ENCODE measurements at regions of chr2 and their contacts with region 1.

Region 1: DNA sequence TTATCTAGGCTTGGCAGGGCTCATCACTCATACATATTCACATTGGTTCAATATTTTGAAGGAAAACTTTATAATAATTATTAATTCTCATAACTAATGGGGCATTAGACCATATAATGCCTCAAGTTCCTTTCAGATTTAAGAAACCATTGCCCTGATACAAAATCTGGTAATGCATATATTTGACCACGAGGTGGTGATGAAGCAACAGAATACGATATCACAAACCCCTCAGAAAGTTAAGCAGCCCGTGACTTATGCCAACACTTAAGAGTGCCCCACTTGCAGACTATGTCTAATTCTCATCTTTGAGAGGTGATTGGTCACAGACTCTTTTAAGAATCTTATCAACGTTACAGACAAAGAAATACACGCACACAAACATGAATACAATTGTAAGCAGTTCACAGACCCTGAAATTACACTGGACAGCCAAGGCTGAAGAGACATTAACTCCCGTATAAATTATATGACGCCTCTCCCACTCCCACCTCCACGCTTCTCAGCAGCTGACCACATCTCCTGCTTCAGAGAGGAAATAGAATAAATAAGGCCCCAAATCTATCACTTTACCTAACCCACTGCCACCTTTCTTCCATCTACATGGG is 20.7 kb upstream of the DNAH6 start:
- DNase-seq: peak; percentile 78
- ATAC-seq: peak; percentile 82
- H3K4me3 ChIP-seq: no peak overlapping the region
- H3K27ac ChIP-seq: no peak overlapping the region
- H3K4me1 ChIP-seq: peaks cover 4% of the 10 kb centered on the region
- H3K27me3 ChIP-seq: no peaks in the 10 kb centered on the region
- CTCF ChIP-seq: peak; percentile 76
- POLR2A ChIP-seq: peak; percentile 33; the same call in 1 of the 2 replicates
- RAD21 ChIP-seq: peak; percentile 82

Region 2: DNA sequence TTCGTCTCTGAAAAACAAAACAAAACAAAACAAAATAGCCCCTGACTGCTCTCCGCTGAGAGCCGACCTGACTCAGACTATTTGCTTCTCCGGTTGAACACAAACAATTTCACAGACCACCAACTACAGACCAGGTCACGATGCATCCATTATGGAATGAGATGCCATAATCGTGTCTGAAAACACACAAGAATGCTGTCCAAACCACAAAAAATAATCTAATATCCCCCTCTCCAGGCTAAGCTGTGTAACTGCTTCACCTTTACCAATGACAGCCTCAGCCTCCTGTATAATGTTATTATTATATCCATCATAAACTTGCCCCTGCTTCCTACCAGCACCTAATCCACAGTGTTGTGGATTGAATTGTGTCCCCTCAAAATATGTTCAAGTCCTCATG is 135.4 kb after region 1 on chr2:
- CTCF ChIA-PET with region 1: no interaction called
- POLR2A ChIA-PET with region 1: no interaction called
- dilution Hi-C with region 1: no loop called
- in situ Hi-C with region 1: loop called (anchors 10 kb)
- intact Hi-C with region 1: loop called (anchors 1 kb)
- DNase-seq: peak; percentile 53
- ATAC-seq: peak; percentile 97
- H3K4me3 ChIP-seq: no peak overlapping the region
- H3K27ac ChIP-seq: no peak overlapping the region
- H3K4me1 ChIP-seq: no peaks in the 10 kb centered on the region
- H3K27me3 ChIP-seq: peaks cover 7% of the 10 kb centered on the region
- CTCF ChIP-seq: peak; percentile 60
- POLR2A ChIP-seq: no peak
- RAD21 ChIP-seq: peak; percentile 74

Region 3: GRCh38 chr2:84807063-84807830 is 311.6 kb after region 1 on chr2:
- CTCF ChIA-PET with region 1: no interaction called
- POLR2A ChIA-PET with region 1: interaction called, 11 read pairs
- dilution Hi-C with region 1: no loop called
- in situ Hi-C with region 1: no loop called
- intact Hi-C with region 1: no loop called
- DNase-seq: peak; percentile 100
- ATAC-seq: peak; percentile 87
- H3K4me3 ChIP-seq: no peak overlapping the region
- H3K27ac ChIP-seq: peak overlapping the region; percentile 97
- H3K4me1 ChIP-seq: peaks cover 11% of the 10 kb centered on the region
- H3K27me3 ChIP-seq: no peaks in the 10 kb centered on the region
- CTCF ChIP-seq: no peak
- POLR2A ChIP-seq: peak; percentile 76
- RAD21 ChIP-seq: no peak

Region 4: GRCh38 chr2:84865181-84865783 is 369.6 kb after region 1 on chr2:
- CTCF ChIA-PET with region 1: no interaction called
- POLR2A ChIA-PET with region 1: no interaction called
- dilution Hi-C with region 1: no loop called
- in situ Hi-C with region 1: no loop called
- intact Hi-C with region 1: loop called (anchors 5 kb)
- DNase-seq: peak; percentile 43
- ATAC-seq: peak; percentile 63
- H3K4me3 ChIP-seq: no peak overlapping the region
- H3K27ac ChIP-seq: no peak overlapping the region
- H3K4me1 ChIP-seq: peaks cover 2% of the 10 kb centered on the region; the same call in 1 of the 2 replicates
- H3K27me3 ChIP-seq: no peaks in the 10 kb centered on the region
- CTCF ChIP-seq: peak; percentile 43; the same call in 1 of the 2 replicates
- POLR2A ChIP-seq: no peak
- RAD21 ChIP-seq: peak; percentile 57

Region 5: GRCh38 chr2:85277416-85278158 is 781.9 kb after region 1 on chr2:
- CTCF ChIA-PET with region 1: no interaction called
- POLR2A ChIA-PET with region 1: no interaction called
- dilution Hi-C with region 1: no loop called
- in situ Hi-C with region 1: loop called (anchors 25 kb)
- intact Hi-C with region 1: no loop called
- DNase-seq: peak; percentile 89
- ATAC-seq: peak; percentile 89
- H3K4me3 ChIP-seq: no peak overlapping the region
- H3K27ac ChIP-seq: peak overlapping the region; percentile 87
- H3K4me1 ChIP-seq: peaks cover 36% of the 10 kb centered on the region
- H3K27me3 ChIP-seq: no peaks in the 10 kb centered on the region
- CTCF ChIP-seq: no peak
- POLR2A ChIP-seq: no peak
- RAD21 ChIP-seq: no peak

Region 6: DNA sequence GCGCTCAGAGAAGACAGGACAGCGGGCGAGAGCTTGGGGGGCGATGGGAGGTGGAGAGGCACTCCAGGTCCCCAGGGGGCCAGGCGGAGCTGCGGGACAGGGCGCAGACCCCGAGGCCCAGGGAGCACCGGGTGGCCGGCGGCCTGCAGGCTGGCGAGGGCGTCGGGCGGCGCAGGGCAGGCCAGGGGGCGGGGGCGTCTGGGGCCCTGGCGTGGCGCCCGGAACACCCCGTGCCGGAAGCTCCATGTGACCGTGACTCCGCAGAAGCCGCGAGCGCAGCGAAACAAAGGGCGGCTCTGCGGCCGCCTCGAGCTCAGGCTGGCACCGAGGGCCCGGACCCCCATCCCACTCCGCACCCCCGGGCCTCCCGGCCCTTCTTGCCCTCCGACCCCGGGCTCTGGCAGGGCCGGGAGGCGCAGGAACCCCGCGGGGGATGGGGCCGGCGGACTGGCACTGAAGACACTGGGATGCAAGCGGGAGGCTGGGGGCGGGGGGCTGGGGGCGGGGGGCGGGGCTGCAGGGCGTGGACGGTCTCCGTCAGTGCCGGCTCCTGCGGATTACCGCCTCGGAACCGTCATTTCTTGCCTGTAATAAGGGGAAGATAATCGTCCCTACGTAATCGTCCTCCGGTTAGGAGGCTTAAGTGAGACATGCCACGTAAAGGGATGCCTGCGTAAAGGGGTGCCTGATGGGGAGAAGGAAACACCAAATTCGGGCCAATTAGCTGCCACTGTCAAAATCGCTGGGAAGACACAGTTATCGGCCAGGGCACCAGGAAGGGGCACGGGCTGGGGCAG is 942.0 kb after region 1 on chr2:
- CTCF ChIA-PET with region 1: no interaction called
- POLR2A ChIA-PET with region 1: no interaction called
- dilution Hi-C with region 1: no loop called
- in situ Hi-C with region 1: no loop called
- intact Hi-C with region 1: no loop called
- DNase-seq: peak; percentile 77
- ATAC-seq: peak; percentile 63
- H3K4me3 ChIP-seq: peak overlapping the region; percentile 29; the same call in 1 of the 2 replicates
- H3K27ac ChIP-seq: peak overlapping the region; percentile 79
- H3K4me1 ChIP-seq: peaks cover 29% of the 10 kb centered on the region
- H3K27me3 ChIP-seq: no peaks in the 10 kb centered on the region
- CTCF ChIP-seq: no peak
- POLR2A ChIP-seq: peak; percentile 78
- RAD21 ChIP-seq: no peak

Measured in IMR-90 (cell line).